ENCODE measurements at regions of chr12 and their contacts with region 1.

Region 1: GRCh38 chr12:64610149-64610678 is at the start of gene RASSF3:
- DNase-seq: peak; percentile 84
- H3K4me3 ChIP-seq: peak within 1 kb of the TSS; percentile 97
- H3K27ac ChIP-seq: peak within 1 kb of the TSS; percentile 88
- H3K4me1 ChIP-seq: peaks cover 4% of the 10 kb centered on the region
- H3K27me3 ChIP-seq: no peaks in the 10 kb centered on the region
- CTCF ChIP-seq: no peak
- total RNA-seq, gene RASSF3: 37.7 and 38.2 TPM in 2 replicates

Region 2: DNA sequence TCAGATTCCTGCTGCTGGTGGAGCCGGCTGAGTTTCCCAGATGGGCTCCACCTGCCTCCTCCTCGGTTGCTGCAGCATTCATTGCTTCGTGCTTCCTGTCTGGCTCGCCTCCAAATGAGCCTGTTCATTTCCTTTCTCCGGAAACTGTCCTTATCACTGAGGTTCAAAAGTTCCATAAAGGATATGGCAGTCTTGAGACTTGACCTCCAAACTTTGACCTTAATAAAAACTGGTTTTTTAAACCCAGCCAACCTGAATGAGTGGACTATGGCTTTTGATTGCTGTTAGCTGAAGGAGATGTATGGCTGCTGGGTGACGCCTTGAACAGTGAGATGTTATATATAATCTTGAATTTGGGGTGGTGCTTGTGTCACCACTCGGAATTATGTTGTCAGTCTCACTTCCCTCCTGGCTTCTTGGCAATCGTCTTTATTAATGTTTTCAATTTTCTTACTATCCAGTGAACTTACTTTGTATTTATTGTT is 62.8 kb after region 1 on chr12:
- CTCF ChIA-PET with region 1: no interaction called
- POLR2A ChIA-PET with region 1: no interaction called
- intact Hi-C with region 1: loop called (anchors 5 kb)
- DNase-seq: peak; percentile 93
- H3K4me3 ChIP-seq: no peak overlapping the region
- H3K27ac ChIP-seq: peak overlapping the region; percentile 77
- H3K4me1 ChIP-seq: peaks cover 71% of the 10 kb centered on the region
- H3K27me3 ChIP-seq: no peaks in the 10 kb centered on the region
- CTCF ChIP-seq: no peak